ENCODE measurements at regions of chr10 and their contacts with region 1.

Region 1: DNA sequence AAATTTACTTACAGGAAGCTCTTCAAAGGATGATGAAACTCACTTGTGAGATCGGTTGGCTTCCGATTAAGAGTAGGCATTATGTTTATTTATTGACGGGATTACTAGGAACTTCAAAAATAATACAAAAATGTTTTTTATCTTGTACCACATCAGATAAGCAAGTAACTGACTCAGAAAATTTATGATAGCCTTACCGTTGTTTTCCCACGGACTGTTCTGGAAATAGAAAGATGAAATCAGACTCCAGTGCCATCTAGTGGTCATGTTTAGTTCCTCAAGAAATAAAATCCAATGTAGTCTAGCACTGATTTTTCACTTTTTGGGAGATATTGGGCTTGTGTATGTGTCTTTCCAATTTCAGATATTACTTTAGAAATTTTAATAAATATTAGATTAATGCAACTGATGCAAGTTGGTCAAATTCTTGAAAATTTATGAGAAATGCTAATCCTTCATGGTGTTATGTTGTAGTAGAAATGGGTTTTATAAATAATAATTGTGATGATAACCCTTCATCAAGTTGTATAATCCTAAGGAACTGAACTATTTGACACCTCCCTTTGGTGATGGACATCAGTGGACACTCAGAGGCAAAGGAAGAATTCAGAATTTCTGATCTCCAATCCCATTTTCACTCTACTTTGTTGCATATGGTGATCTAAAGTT is 168.8 kb downstream of the TMEM26 start:
- DNase-seq: no peak
- H3K4me3 ChIP-seq: no peak overlapping the region
- H3K27ac ChIP-seq: no peak overlapping the region
- H3K4me1 ChIP-seq: no peaks in the 10 kb centered on the region
- H3K27me3 ChIP-seq: no peaks in the 10 kb centered on the region
- CTCF ChIP-seq: peak; percentile 49 to 75 (median 67)
- EP300 ChIP-seq: no peak
- POLR2A ChIP-seq: no peak

Region 2: GRCh38 chr10:60444494-60445064 is 839.8 kb before region 1 on chr10:
- intact Hi-C with region 1: loop called in 1 of 4 experiments (anchors 5 kb)
- DNase-seq: no peak
- H3K4me3 ChIP-seq: no peak overlapping the region
- H3K27ac ChIP-seq: no peak overlapping the region
- H3K4me1 ChIP-seq: no peaks in the 10 kb centered on the region
- H3K27me3 ChIP-seq: no peaks in the 10 kb centered on the region
- CTCF ChIP-seq: peak in 2 of 3 donors; percentile 28 to 32
- EP300 ChIP-seq: no peak
- POLR2A ChIP-seq: no peak

Region 3: GRCh38 chr10:60964257-60965235 is 319.8 kb before region 1 on chr10:
- intact Hi-C with region 1: loop called in 1 of 4 experiments (anchors 10 kb)
- DNase-seq: peak; percentile 62 to 80 (median 68)
- H3K4me3 ChIP-seq: no peak overlapping the region
- H3K27ac ChIP-seq: peak overlapping the region in 1 of 2 donors; percentile 16
- H3K4me1 ChIP-seq: no peaks in the 10 kb centered on the region
- H3K27me3 ChIP-seq: no peaks in the 10 kb centered on the region
- CTCF ChIP-seq: peak; percentile 70 to 85 (median 73)
- EP300 ChIP-seq: no peak
- POLR2A ChIP-seq: no peak

Region 4: GRCh38 chr10:61159253-61159652 is 125.1 kb before region 1 on chr10:
- intact Hi-C with region 1: loop called in 1 of 4 experiments (anchors 10 kb)
- DNase-seq: no peak
- H3K4me3 ChIP-seq: no peak overlapping the region
- H3K27ac ChIP-seq: no peak overlapping the region
- H3K4me1 ChIP-seq: no peaks in the 10 kb centered on the region
- H3K27me3 ChIP-seq: no peaks in the 10 kb centered on the region
- CTCF ChIP-seq: no peak
- EP300 ChIP-seq: no peak
- POLR2A ChIP-seq: no peak

Region 5: GRCh38 chr10:61244261-61244775 is 40.0 kb before region 1 on chr10:
- intact Hi-C with region 1: no loop called
- DNase-seq: no peak
- H3K4me3 ChIP-seq: no peak overlapping the region
- H3K27ac ChIP-seq: no peak overlapping the region
- H3K4me1 ChIP-seq: no peaks in the 10 kb centered on the region
- H3K27me3 ChIP-seq: no peaks in the 10 kb centered on the region
- CTCF ChIP-seq: no peak
- EP300 ChIP-seq: no peak
- POLR2A ChIP-seq: no peak

Region 6: GRCh38 chr10:61319386-61320256 is 35.3 kb after region 1 on chr10:
- intact Hi-C with region 1: no loop called
- DNase-seq: no peak
- H3K4me3 ChIP-seq: no peak overlapping the region
- H3K27ac ChIP-seq: no peak overlapping the region
- H3K4me1 ChIP-seq: no peaks in the 10 kb centered on the region
- H3K27me3 ChIP-seq: no peaks in the 10 kb centered on the region
- CTCF ChIP-seq: no peak
- EP300 ChIP-seq: no peak
- POLR2A ChIP-seq: no peak

Region 7: DNA sequence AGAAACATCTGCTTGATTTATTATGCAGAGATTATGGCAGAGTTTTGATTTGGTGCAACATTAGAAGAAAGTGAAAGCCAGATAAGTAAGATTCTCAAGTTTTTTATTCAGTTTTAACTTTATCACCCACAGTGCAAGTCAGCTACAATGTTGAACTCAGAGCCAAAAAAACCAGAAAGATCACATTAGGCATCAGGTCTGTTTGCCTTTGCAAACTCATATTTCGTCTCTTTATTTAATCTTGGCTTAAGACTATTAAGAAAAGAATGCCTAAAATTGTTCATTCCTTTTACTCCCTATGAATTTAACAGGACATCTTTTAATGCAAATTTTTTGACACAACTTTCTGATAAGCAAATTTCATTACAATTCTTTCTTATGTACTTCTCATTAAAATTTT is 244.9 kb after region 1 on chr10:
- intact Hi-C with region 1: no loop called
- DNase-seq: no peak
- H3K4me3 ChIP-seq: no peak overlapping the region
- H3K27ac ChIP-seq: no peak overlapping the region
- H3K4me1 ChIP-seq: no peaks in the 10 kb centered on the region
- H3K27me3 ChIP-seq: no peaks in the 10 kb centered on the region
- CTCF ChIP-seq: no peak
- EP300 ChIP-seq: no peak
- POLR2A ChIP-seq: no peak

Region 8: GRCh38 chr10:62224606-62225005 is 940.2 kb after region 1 on chr10:
- intact Hi-C with region 1: no loop called
- DNase-seq: no peak
- H3K4me3 ChIP-seq: no peak overlapping the region
- H3K27ac ChIP-seq: no peak overlapping the region
- H3K4me1 ChIP-seq: no peaks in the 10 kb centered on the region
- H3K27me3 ChIP-seq: no peaks in the 10 kb centered on the region
- CTCF ChIP-seq: no peak
- EP300 ChIP-seq: no peak
- POLR2A ChIP-seq: no peak

Measured in ovary (tissue), 10 donors.